ENCODE measurements at regions of chr1 and their contacts with region 1.

Region 1: DNA sequence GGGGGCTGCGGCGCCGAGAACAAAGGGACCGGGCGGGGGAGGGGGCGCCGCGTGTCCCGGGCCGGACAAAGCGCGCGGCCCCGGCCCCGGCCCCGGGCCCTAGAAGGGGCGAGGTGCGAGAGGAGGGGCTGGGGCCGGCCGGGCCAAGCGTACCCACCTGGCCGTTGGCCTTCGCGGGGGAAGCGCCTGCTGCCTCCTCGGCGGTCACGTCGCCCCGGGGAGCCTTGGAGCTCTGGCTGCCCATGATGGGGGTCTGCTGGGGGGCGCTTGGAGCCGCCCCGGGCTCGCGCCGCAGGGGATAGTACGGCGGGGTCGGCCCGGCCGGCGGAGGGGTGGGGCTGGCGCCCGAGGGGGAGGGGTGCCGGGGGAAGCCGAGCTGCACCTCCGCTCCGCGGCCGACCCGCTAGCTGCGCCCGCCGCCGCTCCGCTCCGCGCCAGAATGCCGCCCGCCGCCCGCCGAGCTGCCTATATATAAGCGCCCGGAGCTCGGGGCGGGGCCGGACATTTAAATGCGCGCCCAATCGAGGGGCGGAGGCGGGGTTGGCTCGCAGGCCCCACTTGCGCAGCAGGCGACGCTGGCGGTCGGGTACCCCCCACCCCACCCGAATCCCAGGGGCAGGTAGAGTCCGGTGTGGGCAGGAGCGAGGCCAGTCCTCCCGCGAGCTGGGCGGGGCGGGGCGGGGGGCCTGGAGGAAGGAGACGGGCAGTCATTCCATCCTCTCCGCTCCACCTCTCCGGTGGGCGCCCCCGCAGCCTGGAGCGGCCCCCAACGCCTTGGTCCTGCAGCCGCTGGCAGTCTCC is at the start of gene MARCKSL1:
- DNase-seq: peak; percentile 83 to 92 (median 86)
- H3K4me3 ChIP-seq: peak within 1 kb of the TSS; percentile 52 to 90 (median 75)
- H3K27ac ChIP-seq: peak within 1 kb of the TSS; percentile 85 to 100 (median 97)
- H3K27me3 ChIP-seq: no peaks in the 10 kb centered on the region
- CTCF ChIP-seq: peak in 16 of 56 donors; percentile 6 to 36 (median 18)
- total RNA-seq, gene MARCKSL1: 90.1 to 633 (median 196) TPM

Region 2: GRCh38 chr1:32013386-32014198 is 322.4 kb before region 1 on chr1 and contains the start of gene KHDRBS1:
- intact Hi-C with region 1: no loop called
- DNase-seq: peak; percentile 96 to 98 (median 98)
- H3K4me3 ChIP-seq: peak within 1 kb of the TSS; percentile 73 to 100 (median 98)
- H3K27ac ChIP-seq: peak within 1 kb of the TSS; percentile 81 to 100 (median 97)
- H3K27me3 ChIP-seq: no peaks in the 10 kb centered on the region
- CTCF ChIP-seq: peak in 28 of 56 donors; percentile 5 to 51 (median 26)
- total RNA-seq, gene KHDRBS1: 50.0 to 101 (median 75.5) TPM

Region 3: DNA sequence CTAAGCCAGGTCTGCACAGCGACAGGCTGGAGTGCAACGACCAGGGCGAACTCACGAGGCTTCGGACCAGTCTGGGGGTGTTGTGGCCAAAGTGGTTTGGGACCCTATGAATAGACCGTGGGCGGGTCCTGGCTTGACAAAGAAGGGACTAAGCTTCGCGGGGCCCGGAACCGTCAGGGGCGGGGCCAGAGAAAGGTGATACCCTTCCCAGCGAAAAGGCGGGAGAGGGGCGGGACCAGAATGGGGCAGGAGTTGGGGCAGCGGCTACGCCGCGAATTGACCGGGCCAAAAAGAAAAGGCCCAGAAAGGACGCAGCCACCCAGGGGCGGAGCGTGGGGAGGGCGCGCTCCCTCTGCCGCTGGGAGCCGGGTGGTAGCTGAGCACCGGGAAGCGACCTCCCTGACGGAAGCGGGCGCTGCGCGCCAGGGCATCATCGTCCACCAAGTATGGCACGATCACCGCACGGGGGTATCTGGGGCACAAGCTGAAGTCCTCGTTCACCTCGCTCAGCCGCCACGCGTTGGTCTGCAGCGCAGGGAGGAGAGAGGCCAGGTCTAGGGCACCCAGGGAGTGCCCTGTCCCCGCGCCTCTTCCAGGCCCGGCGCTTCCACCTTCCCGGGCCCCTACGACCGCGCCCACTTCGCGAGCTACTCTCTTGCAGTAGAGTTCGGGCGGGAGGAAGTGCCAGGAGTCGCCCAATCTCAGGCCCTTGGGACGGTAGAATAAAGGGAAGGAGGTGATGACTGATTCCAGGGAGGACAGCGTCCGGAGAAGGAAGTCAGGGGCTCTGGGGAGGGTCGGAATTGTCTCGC is 95.6 kb before region 1 on chr1:
- intact Hi-C with region 1: loop called (anchors 2 to 5 kb)
- DNase-seq: peak; percentile 56 to 81 (median 66)
- H3K4me3 ChIP-seq: peak overlapping the region; percentile 50 to 90 (median 74)
- H3K27ac ChIP-seq: peak overlapping the region in 57 of 59 donors; percentile 19 to 86 (median 76)
- H3K27me3 ChIP-seq: no peaks in the 10 kb centered on the region
- CTCF ChIP-seq: peak in 53 of 56 donors; percentile 12 to 64 (median 46)

Region 4: GRCh38 chr1:32351399-32352238 is 15.6 kb after region 1 on chr1:
- intact Hi-C with region 1: loop called (anchors 1 kb)
- DNase-seq: peak; percentile 75 to 92 (median 86)
- H3K4me3 ChIP-seq: peak overlapping the region; percentile 44 to 93 (median 80)
- H3K27ac ChIP-seq: peak overlapping the region; percentile 81 to 99 (median 98)
- H3K27me3 ChIP-seq: no peaks in the 10 kb centered on the region
- CTCF ChIP-seq: peak in 14 of 56 donors; percentile 1 to 43 (median 20)

Region 5: GRCh38 chr1:32394141-32394889 is 58.3 kb after region 1 on chr1 and contains the start of gene BSDC1:
- intact Hi-C with region 1: loop called (anchors 1 to 5 kb)
- DNase-seq: peak; percentile 95 to 99 (median 99)
- H3K4me3 ChIP-seq: peak within 1 kb of the TSS; percentile 63 to 100 (median 95)
- H3K27ac ChIP-seq: peak within 1 kb of the TSS; percentile 63 to 96 (median 91)
- H3K27me3 ChIP-seq: no peaks in the 10 kb centered on the region
- CTCF ChIP-seq: peak in 26 of 56 donors; percentile 4 to 61 (median 23)
- total RNA-seq, gene BSDC1: 87.5 to 123 (median 103) TPM

Measured in dorsolateral prefrontal cortex (tissue), 120 donors.